ENCODE measurements at regions of chr19 and their contacts with region 1.

Region 1: DNA sequence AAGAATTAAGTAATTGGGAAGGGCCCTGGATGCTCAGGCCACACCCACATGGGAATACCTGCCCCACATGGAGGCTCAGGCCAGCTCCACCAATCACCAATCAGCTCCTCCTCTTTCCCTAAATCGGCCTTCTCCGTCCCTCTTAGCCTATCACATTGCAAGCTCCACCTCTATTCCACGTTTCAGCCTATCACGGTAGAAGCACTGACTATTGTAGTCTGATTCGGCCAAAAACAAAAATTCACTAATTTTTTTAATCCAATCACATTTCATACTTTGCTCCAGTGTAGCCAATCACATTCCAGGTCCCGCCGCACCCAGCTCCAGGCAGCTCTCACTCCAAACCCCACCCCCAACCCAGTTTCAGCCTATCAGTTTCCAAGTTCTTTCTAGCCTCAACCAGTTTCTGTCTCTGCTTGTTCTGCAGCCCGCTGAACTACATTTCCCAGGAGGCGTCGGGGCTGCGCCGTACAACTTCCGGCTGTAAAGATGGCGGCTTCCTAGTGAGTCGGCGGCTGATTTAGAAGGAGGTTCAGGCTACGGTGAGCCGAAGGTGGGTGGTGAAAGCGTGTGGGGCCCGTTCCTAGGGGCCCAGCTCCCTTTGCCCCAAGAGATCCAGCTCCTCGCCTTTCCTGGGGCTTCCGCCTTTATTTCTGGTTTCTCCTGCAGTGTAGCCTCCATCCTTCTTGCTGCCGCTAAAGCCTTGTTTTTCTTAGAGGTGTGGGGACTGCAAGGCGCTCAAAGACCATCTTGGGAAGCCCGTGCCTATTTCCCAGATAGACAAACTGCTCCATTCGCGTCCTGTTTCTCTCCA is at the start of gene BABAM1:
- DNase-seq: peak; percentile 96
- ATAC-seq: peak; percentile 98
- total RNA-seq, gene BABAM1: 82.0 TPM

Region 2: DNA sequence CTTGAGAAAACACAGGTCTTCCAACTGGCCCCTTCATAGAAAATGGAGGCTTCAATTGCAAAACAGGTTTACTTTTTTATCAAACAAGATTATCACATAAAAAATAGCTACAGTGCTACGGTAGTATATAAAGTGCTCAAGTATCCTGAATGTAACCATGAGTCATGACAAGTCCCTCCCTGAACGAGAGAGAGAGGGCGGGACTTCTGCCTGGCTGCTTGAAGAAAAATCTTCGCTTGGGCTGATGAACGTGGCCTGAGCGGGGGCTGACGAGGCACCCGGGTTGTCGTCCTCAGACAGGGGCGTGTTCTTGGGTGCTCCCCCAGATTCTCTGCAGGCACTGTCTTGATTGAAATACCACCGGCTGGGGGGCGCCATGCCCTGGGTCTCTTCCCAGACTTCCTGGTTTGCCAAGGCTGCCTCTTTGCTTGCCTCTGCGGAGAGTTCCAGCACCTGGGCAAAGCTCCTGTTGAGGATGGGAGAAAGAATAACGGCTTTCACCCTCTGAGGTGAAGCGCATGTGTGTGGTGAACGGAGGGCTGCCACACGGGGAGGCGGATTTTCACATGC is 217.4 kb before region 1 on chr19:
- intact Hi-C with region 1: no loop called
- DNase-seq: no peak
- ATAC-seq: no peak

Region 3: DNA sequence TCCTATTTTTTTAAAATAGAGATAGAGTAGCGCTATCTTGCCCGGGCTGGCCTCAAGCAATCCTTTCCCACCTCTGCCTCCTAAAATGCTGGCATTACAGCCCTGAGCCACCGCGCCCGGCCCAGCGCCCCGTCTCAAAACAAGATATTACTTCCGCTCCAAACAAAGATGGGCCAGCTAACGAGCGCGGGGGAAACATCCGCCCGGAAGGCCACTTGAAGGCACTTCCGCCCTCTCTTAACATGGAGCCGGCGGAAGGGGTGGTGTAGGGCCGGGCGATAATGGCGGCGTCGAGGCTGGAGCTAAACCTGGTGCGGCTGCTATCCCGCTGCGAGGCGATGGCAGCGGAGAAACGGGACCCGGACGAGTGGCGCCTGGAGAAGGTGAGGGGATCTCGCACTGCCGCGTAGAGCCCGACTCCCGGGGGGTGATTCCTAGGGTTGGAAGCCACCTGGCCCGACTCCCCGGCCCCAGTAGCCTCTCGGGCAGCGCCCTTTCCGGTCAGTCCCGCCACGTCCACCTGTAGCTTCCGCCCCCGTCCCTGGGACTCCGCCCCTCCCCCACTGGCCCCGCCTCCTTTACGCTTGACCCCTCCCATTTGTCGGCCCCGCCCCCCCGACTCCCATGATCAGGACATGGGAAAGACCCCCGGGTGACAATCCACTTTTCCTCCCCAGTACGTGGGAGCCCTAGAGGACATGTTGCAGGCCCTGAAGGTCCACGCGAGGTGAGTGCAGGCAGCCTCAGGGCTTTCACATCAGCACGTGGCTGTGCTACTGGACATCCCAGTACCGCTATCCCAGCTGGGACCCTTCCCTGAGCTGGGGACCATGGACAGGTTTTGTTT is 51.8 kb before region 1 on chr19 and contains the start of gene USE1:
- intact Hi-C with region 1: loop called (anchors 1 kb)
- DNase-seq: peak; percentile 96
- ATAC-seq: peak; percentile 97
- total RNA-seq, gene USE1: 32.8 TPM

Region 4: DNA sequence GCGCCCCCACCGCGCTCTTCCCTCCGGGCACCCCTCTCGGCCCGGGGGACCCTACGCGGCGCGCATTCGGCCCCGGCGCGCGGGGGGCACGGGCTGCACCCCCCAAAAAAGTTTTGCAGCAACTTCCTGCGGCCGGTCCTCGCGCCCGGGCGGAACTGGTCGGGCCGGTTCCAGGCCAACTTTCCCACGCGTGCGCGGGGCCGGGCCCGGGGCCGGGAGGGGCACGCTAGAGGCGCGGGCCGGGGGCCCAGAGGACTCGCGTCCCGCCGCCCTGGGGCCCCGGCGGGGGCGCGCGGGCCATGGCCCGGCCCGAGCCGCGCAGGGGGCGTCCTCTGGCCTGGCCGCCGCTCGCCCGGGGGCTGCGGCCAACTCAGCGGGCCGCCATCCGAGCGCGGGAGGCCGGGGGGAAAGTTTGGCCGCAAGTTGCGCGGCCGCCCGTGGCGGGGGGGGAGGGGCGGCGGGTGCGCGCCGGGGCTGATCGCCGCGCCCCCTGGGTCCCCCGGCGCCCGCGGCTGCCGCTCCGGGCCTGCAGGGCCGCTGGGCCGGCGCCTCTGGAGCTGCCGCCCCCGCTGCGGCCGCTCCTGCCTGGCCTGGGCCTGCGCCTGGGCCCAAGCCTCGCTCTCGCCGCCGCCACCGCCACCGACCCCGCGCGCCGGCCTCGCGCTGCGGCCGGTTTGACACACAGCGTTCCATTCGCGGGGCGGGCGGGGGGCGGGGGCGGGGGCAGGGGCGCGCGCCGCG is 21.8 kb before region 1 on chr19 and contains the start of gene NR2F6:
- intact Hi-C with region 1: no loop called
- DNase-seq: no peak
- ATAC-seq: no peak
- total RNA-seq, gene NR2F6: 76.4 TPM

Region 5: GRCh38 chr19:17305517-17306284 is 38.5 kb after region 1 on chr19 and contains the start of gene MRPL34:
- intact Hi-C with region 1: loop called (anchors 1 kb)
- DNase-seq: peak; percentile 96
- ATAC-seq: peak; percentile 68
- total RNA-seq, gene MRPL34: 200 TPM

Measured in Right ventricle myocardium inferior (tissue), 1 donor.